ENCODE measurements at regions of chr10 and their contacts with region 1.

Region 1: DNA sequence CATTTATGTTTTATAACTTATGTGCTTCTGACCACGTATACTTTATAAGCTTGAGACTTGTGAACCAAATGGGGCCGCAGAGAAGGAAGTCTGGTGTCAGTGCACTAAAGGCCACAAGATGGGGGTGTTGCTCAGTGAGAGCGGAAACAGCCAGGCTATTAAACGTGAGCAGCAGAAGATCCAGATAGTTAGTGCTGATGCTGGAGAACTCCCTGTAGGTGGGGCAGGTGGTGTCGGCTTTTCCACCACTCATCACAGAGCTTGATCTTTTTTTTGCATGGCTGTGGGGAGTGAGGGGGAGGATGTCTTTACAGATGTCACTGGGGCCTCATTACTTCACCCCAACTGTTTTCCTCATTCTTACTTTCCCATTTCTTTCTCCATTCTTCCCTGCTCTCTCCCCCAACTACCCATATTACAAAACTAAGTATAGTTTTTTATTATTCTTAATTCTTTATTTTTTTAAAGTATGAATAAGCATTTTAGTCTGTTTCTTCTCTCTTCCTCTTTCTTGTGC is 34.7 kb downstream of the ACADSB start:
- DNase-seq: no peak
- H3K4me3 ChIP-seq: no peak overlapping the region
- CTCF ChIP-seq: peak; percentile 81

Region 2: DNA sequence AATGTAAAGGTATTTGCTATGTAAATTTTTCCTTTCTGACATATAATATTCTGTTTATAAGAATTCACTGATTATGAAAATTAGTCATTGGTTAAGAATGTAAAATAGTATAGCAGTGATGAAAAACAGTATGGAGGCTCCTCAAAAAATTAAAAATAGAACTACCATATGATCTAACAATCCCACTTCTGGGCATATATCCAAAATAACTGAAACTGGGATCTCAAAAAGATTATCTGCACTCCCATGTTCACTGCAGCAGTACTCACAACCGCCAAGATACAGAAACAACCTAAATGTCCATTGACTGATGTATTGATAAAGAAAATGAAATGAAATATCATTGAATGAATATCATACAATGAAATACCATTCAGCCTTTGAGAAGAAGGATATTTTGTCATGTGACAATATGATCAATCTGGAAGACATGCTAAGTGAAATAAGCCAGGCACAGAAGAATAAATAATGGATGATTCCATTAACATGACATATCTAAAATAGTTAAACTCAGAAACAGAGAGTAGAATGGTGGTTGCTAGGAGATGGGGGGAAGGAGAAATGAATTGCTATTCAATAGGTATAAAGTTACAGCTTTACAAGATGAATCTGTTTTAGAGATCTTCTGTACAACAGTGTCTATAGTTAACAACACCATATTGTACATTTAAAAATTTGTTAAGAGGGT is 103.5 kb before region 1 on chr10:
- CTCF ChIA-PET with region 1: no interaction called
- POLR2A ChIA-PET with region 1: no interaction called
- DNase-seq: peak; percentile 56
- H3K4me3 ChIP-seq: no peak overlapping the region
- CTCF ChIP-seq: no peak

Region 3: DNA sequence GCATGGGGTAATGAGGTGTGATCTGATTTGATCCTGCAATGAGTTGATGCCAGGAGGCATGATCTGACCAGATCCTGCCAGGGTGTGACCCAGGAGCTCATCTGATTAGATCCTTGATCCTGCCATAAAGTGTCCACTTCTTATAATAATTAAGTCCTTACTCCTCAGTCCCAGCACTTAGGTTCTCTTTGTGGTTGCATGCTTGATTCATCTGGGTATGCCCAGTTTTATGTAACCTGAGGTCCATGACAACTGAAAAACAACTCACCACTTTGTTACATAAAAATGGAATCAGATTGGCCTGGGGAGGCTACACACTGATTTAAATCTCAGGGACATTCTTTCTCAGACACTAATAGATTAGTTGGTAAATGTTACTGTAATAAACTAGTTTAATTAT is 15.6 kb before region 1 on chr10:
- CTCF ChIA-PET with region 1: interaction called, 14 read pairs
- POLR2A ChIA-PET with region 1: interaction called, 3 read pairs
- DNase-seq: no peak
- H3K4me3 ChIP-seq: no peak overlapping the region
- CTCF ChIP-seq: no peak

Region 4: DNA sequence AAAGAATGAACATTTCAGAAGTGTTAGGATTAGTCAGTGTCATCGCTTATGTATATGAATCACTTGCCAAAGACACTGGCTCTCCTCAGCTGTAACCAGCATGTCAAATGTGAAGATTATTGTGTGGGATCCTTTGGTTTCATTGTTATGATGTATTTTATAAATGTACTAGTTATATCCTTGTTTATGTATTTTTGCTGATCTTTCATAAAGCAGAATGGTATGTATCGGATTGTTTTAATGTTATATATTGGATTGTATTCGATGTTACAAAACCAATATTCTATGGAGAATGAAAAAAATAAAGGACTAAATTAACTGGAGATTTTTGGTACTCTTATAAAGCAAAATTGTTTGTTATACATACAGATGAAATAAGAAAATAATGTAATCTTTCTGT is 14.5 kb after region 1 on chr10:
- CTCF ChIA-PET with region 1: interaction called, 12 read pairs
- POLR2A ChIA-PET with region 1: no interaction called
- DNase-seq: no peak
- H3K4me3 ChIP-seq: no peak overlapping the region
- CTCF ChIP-seq: no peak

Region 5: GRCh38 chr10:123559066-123559822 is 515.8 kb after region 1 on chr10:
- CTCF ChIA-PET with region 1: interaction called, 73 read pairs
- POLR2A ChIA-PET with region 1: no interaction called
- DNase-seq: no peak
- H3K4me3 ChIP-seq: no peak overlapping the region
- CTCF ChIP-seq: peak; percentile 97

Measured in AG04449 (cell line).